CD4-positive, alpha-beta T cell (primary cell): ENCODE measurements at regions of chr5 and their contacts with region 1.

Region 1: GRCh38 chr5:173001229-173001841 is 17.8 kb downstream of the ATP6V0E1 start:
- DNase-seq: peak in 1 of 14 experiments; percentile 39
- ATAC-seq: peak; percentile 37
- H3K4me3 ChIP-seq: no peak overlapping the region
- H3K4me3 Mint-ChIP-seq: no peak overlapping the region
- H3K27ac ChIP-seq: no peak overlapping the region
- H3K27ac Mint-ChIP-seq: peak overlapping the region; percentile 36
- H3K4me1 ChIP-seq: peaks cover 48% of the 10 kb centered on the region
- H3K4me1 Mint-ChIP-seq: peaks cover 66% of the 10 kb centered on the region
- H3K27me3 ChIP-seq: no peaks in the 10 kb centered on the region
- H3K27me3 Mint-ChIP-seq: no peaks in the 10 kb centered on the region
- CTCF ChIP-seq: no peak

Region 2: DNA sequence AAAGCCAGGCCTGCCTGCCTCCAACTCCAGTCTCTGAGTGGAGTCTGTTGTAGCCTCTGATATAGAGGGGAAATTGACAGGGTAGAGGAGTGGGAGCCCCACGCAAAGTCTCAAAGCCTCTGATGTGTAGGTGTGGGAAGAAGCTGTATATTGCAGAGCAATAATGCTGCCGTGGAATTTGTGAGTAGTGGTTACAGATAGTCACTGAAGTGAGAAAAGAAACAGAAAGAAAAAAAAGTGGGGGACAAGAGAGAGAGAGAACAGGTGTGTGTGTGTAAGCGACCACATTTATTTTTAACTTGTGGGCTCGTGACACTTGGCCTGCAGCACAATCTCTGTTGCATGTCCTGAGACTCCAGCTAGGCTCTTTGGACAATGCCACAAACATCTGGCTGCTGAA is 1272.0 kb after region 1 on chr5:
- CTCF ChIA-PET with region 1: no interaction called
- POLR2A ChIA-PET with region 1: no interaction called
- intact Hi-C with region 1: loop called in 1 of 2 experiments (anchors 10 kb)
- DNase-seq: no peak
- ATAC-seq: no peak
- H3K4me3 ChIP-seq: no peak overlapping the region
- H3K4me3 Mint-ChIP-seq: no peak overlapping the region
- H3K27ac ChIP-seq: no peak overlapping the region
- H3K27ac Mint-ChIP-seq: no peak overlapping the region
- H3K4me1 ChIP-seq: no peaks in the 10 kb centered on the region
- H3K4me1 Mint-ChIP-seq: no peaks in the 10 kb centered on the region
- H3K27me3 ChIP-seq: no peaks in the 10 kb centered on the region
- H3K27me3 Mint-ChIP-seq: no peaks in the 10 kb centered on the region
- CTCF ChIP-seq: no peak